ENCODE measurements at regions of chr20 and their contacts with region 1.

Region 1: GRCh38 chr20:1776681-1777475 is 118.3 kb upstream of the SIRPA start:
- DNase-seq: peak; percentile 89
- H3K4me3 Mint-ChIP-seq: peak overlapping the region; percentile 73
- H3K27ac Mint-ChIP-seq: no peak overlapping the region
- H3K4me1 Mint-ChIP-seq: peaks cover 15% of the 10 kb centered on the region
- H3K27me3 Mint-ChIP-seq: peaks cover 3% of the 10 kb centered on the region

Region 2: DNA sequence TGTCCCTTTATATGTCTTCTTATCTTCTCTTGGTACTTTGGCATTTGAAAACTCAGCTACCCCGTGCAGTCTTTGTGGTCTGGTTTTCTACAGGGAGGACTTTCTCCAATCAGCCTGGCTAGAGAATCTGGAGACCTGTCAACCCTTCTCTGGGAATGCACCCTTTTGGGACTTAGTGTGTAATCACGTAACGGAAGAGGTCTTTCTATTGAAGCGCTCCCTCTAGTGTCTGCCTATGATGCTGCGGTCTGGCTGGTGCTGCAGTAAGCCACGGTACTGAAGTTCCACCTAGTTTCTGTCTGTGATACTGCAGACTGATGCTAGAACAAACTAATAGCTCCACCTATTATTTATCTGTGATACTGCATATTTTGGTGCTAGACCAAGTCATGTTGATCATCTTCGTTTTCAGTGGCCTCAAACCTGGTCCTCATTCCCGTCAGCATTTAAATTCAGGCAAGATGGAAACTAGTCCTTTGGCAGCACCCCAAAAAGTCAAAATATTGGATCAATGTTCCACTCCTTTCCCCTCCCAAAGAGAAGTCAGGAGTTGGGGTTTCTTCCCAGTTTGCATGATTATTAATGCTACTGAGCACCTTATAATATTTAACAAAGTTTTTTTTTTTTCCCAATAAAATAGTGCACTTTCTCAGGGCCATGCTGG is 273.2 kb before region 1 on chr20:
- CTCF ChIA-PET with region 1: interaction called, 44 read pairs
- POLR2A ChIA-PET with region 1: no interaction called
- intact Hi-C with region 1: no loop called
- DNase-seq: peak; percentile 83
- H3K4me3 Mint-ChIP-seq: no peak overlapping the region
- H3K27ac Mint-ChIP-seq: no peak overlapping the region
- H3K4me1 Mint-ChIP-seq: peaks cover 3% of the 10 kb centered on the region
- H3K27me3 Mint-ChIP-seq: peaks cover 17% of the 10 kb centered on the region

Region 3: GRCh38 chr20:1533059-1533458 is 243.8 kb before region 1 on chr20:
- CTCF ChIA-PET with region 1: interaction called, 8 read pairs
- POLR2A ChIA-PET with region 1: no interaction called
- intact Hi-C with region 1: loop called (anchors 1 kb)
- DNase-seq: no peak
- H3K4me3 Mint-ChIP-seq: no peak overlapping the region
- H3K27ac Mint-ChIP-seq: no peak overlapping the region
- H3K4me1 Mint-ChIP-seq: peaks cover 3% of the 10 kb centered on the region
- H3K27me3 Mint-ChIP-seq: peaks cover 4% of the 10 kb centered on the region

Region 4: GRCh38 chr20:1588533-1589460 is 188.1 kb before region 1 on chr20:
- CTCF ChIA-PET with region 1: interaction called, 9 read pairs
- POLR2A ChIA-PET with region 1: no interaction called
- intact Hi-C with region 1: loop called (anchors 5 kb)
- DNase-seq: peak; percentile 44
- H3K4me3 Mint-ChIP-seq: no peak overlapping the region
- H3K27ac Mint-ChIP-seq: peak overlapping the region; percentile 88
- H3K4me1 Mint-ChIP-seq: peaks cover 26% of the 10 kb centered on the region
- H3K27me3 Mint-ChIP-seq: no peaks in the 10 kb centered on the region

Region 5: DNA sequence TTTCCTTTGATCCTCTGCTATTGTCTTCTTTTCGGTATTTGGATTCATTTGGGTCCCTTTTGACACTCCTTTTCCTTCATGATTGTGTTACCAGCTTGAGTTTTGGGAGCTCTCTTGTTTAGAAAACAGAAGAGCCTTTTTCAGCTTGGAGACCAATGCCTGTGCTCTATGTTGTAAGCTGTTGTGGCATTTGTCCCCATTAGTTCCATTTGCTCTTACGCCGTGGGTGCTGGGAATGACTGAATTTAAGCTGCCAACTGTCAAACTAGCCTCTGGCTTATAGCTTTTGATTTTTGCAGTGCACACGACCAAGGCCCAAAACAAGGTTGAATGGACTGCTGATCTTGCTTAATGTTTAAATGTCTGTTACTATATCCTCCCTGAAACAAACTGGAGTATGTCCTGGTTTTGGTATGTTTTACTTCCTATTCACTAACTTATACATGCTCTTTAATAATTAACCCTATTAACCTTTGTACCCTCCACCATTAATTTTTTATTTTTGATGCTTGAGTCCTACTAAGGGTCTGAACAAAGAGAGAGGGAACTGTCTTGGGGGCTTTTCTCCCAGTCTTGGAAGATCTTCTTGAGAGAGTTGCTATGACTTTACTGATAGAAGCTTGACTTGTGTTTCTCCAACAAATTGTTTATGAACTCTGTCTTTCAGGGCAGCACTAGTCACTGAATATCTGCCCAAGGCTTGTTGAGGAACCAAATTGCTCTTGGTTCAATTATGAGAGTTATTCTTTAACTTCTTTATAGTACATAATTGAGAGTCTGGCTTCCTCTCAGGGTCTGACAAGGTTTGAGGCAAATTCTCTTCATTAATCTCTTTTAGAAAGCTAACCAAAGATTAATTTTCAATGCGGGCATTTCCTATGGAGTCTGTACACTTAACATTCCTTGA is 19.0 kb before region 1 on chr20:
- CTCF ChIA-PET with region 1: interaction called, 10 read pairs
- POLR2A ChIA-PET with region 1: no interaction called
- intact Hi-C with region 1: no loop called
- DNase-seq: no peak
- H3K4me3 Mint-ChIP-seq: no peak overlapping the region
- H3K27ac Mint-ChIP-seq: no peak overlapping the region
- H3K4me1 Mint-ChIP-seq: no peaks in the 10 kb centered on the region
- H3K27me3 Mint-ChIP-seq: peaks cover 2% of the 10 kb centered on the region

Region 6: GRCh38 chr20:1876975-1877608 is 100.2 kb after region 1 on chr20:
- CTCF ChIA-PET with region 1: no interaction called
- POLR2A ChIA-PET with region 1: no interaction called
- intact Hi-C with region 1: no loop called
- DNase-seq: no peak
- H3K4me3 Mint-ChIP-seq: no peak overlapping the region
- H3K27ac Mint-ChIP-seq: no peak overlapping the region
- H3K4me1 Mint-ChIP-seq: no peaks in the 10 kb centered on the region
- H3K27me3 Mint-ChIP-seq: peaks cover 1% of the 10 kb centered on the region